ENCODE measurements at regions of chr19 and their contacts with region 1.

Region 1: GRCh38 chr19:41984961-41985360 is 9.1 kb downstream of the ATP1A3 start:
- DNase-seq: no peak
- H3K27ac ChIP-seq: no peak overlapping the region
- CTCF ChIP-seq: no peak

Region 2: DNA sequence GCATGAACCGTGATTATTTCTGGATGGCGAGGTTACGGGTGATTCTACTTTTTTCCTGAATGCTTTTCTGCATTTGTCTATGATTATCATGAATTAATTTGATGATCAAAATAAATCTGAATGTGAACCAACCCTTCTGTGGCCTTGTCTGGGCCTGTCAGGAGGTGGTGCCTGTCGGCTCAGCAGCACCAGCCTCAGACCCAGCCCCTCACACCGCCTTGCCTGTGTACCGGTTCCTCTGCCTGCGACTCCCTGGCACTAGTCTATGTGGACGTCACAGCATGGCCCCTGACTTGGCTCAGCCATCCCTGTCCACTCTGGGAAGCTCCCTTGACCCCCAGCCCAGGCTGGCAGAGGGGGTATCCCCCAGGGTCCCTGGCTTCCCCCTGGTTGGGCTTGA is 10.3 kb before region 1 on chr19:
- CTCF ChIA-PET with region 1: no interaction called
- POLR2A ChIA-PET with region 1: no interaction called
- DNase-seq: no peak
- H3K27ac ChIP-seq: no peak overlapping the region
- CTCF ChIP-seq: no peak

Region 3: GRCh38 chr19:42184401-42184861 is 199.5 kb after region 1 on chr19:
- CTCF ChIA-PET with region 1: no interaction called
- POLR2A ChIA-PET with region 1: interaction called, 12 read pairs
- DNase-seq: peak; percentile 39
- H3K27ac ChIP-seq: peak overlapping the region; percentile 61
- CTCF ChIP-seq: peak; percentile 66